Caco-2 (cell line): ENCODE measurements at regions of chr20 and their contacts with region 1.

Region 1: GRCh38 chr20:63223221-63224207 is 7.6 kb upstream of the YTHDF1 start:
- DNase-seq: peak; percentile 85
- H3K4me3 ChIP-seq: no peak overlapping the region
- H3K4me3 Mint-ChIP-seq: no peak overlapping the region
- H3K27ac Mint-ChIP-seq: no peak overlapping the region
- H3K4me1 ChIP-seq: peaks cover 12% of the 10 kb centered on the region; the same call in 1 of the 2 replicates
- H3K4me1 Mint-ChIP-seq: peaks cover 7% of the 10 kb centered on the region
- H3K27me3 ChIP-seq: no peaks in the 10 kb centered on the region
- H3K27me3 Mint-ChIP-seq: peaks cover 3% of the 10 kb centered on the region
- CTCF ChIP-seq: peak; percentile 96 to 99

Region 2: DNA sequence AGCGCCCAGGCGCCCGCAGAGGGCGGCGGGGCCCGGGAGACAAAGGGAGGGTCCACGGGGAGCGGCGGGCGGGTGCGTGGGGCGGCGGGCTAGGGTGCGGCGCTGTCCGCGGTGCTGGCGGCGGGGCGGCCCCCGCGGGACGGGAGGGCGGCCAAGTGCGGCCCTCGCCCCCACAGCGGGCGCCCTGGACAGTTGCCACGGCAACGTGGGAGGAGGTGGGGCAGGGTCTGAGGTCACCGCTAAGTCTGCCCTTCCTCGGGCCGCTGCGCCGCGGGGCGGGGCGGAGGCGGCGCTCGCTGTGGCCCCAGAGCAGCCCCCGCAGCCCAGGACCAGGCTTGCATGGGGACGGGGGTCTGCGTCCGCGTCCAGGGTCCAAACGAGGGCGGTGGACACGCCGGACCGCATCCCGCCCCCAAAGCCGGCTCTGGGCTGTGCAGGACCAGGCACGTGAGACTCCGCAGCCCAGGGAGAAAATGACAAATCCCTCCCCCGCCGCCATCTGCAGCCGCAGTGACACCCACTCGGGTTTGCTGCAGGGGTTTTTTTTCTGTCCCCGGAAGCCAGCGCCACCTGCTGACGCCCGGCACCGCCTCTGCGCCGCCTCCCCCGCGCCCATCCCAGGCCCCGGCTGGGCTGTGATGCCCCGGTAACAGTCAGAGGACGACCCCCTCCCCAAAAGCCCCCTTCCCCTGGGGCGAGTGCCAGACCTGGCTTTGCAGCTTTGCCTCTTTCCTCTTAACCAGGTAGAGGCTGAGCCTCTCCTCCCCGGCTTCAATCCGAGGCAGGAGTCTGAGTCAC is 44.4 kb before region 1 on chr20:
- CTCF ChIA-PET with region 1: interaction called, 10 read pairs
- POLR2A ChIA-PET with region 1: no interaction called
- intact Hi-C with region 1: no loop called
- DNase-seq: peak; percentile 85 to 88
- H3K4me3 ChIP-seq: peak overlapping the region; percentile 42
- H3K4me3 Mint-ChIP-seq: peak overlapping the region; percentile 71
- H3K27ac Mint-ChIP-seq: no peak overlapping the region
- H3K4me1 ChIP-seq: peaks cover 39% of the 10 kb centered on the region
- H3K4me1 Mint-ChIP-seq: peaks cover 6% of the 10 kb centered on the region
- H3K27me3 ChIP-seq: 0 out of 2 replicates have a peak, but pooled peaks cover 2% of the 10 kb centered on the region
- H3K27me3 Mint-ChIP-seq: peaks cover 18% of the 10 kb centered on the region
- CTCF ChIP-seq: peak; percentile 92 to 94

Region 3: DNA sequence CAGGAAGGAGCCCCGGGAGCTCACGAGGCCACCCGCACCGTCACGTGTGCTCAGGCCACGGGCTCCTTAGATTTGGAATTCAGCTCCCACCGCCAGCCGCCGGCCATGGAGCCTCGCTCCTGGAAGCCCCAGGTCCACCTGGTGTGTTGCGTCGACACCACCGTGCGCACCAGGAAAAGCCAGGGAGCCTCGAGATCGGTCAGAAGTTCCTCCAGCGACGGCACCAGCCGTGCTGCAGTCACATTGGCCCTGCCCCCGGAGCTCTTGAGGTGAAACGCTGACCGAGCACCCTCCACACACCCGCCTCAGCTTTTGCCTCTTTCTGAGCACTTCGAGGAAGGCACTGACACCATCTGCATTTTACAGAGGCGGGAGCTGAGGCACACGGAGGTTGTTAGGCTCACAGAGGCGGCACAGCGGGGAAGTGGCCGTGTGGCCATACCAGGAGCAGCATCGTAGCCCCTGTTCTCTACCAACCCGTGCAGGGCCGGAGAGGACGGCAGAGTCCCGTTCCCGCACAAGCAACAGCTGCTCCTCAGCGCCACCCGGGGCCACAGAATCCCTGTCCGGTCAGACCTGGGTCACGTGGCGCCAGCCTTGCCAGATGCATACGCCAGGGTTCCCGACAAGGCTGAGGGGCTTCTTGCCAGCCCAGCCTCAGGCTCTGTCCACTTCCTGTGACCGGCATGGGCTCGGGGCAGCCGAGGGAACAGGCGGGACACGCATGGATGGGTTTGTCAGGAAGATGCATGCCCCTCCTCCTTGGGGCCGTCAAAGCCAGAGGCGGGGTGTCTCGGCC is 23.2 kb after region 1 on chr20:
- CTCF ChIA-PET with region 1: interaction called, 23 read pairs
- POLR2A ChIA-PET with region 1: no interaction called
- intact Hi-C with region 1: loop called (anchors 1 kb)
- DNase-seq: no peak
- H3K4me3 ChIP-seq: no peak overlapping the region
- H3K4me3 Mint-ChIP-seq: no peak overlapping the region
- H3K27ac Mint-ChIP-seq: no peak overlapping the region
- H3K4me1 ChIP-seq: peaks cover 42% of the 10 kb centered on the region
- H3K4me1 Mint-ChIP-seq: peaks cover 24% of the 10 kb centered on the region
- H3K27me3 ChIP-seq: no peaks in the 10 kb centered on the region
- H3K27me3 Mint-ChIP-seq: no peaks in the 10 kb centered on the region
- CTCF ChIP-seq: no peak

Region 4: DNA sequence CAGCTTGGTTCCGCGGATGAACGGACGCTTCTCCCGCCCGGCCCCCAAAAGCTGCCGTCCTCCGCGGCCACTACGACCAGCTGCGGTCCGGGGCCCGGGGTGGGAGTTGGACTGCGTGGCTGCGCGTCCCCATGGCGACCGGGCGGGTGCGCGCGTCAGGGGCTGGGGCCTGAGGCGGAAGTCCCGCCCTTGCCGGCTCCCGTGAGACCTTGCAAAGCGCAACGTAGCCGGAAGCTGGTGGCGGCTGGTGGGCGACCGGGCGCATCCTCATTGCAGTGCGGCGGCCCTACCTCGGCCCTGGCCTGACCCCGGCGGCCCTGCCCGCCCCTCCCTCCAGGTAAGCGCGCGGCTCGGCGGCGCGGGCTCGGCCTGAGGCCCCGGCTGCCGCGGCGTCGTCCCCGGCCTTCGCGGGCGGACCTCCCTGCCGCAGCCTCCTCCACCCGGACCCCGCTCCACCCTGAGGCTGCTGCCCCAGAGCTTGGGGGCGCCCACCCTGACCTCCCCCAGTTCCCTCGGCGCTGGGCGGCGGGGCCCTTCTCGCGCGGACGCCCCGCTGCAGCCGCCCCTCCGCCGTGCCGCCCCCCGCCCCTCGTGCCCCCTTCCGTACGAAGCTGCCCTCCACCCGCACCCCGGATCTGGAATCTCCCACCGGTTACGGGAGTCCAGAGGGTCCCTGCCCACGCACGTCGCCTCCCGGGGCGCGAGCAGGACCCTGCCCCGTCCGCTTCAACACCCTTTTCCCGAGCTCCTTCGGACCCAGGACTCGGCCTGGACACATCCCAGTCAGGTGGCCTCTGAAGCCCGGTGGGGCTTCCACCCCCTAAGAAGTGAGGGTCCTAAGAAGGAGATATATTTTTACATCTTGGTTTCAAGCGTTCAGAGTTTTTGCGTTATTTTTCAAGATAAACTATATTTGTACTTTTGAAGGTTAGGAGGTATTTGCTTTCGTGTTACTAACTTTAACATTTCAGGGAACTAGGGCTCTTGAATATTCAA is 49.4 kb after region 1 on chr20 and contains the start of gene ARFGAP1:
- CTCF ChIA-PET with region 1: interaction called, 52 read pairs
- POLR2A ChIA-PET with region 1: interaction called, 8 read pairs
- intact Hi-C with region 1: loop called (anchors 2 kb)
- DNase-seq: peak; percentile 96 to 98
- H3K4me3 ChIP-seq: peak within 1 kb of the TSS; percentile 97
- H3K4me3 Mint-ChIP-seq: peak within 1 kb of the TSS; percentile 81
- H3K27ac Mint-ChIP-seq: peak within 1 kb of the TSS; percentile 86
- H3K4me1 ChIP-seq: peaks cover 18% of the 10 kb centered on the region
- H3K4me1 Mint-ChIP-seq: peaks cover 23% of the 10 kb centered on the region
- H3K27me3 ChIP-seq: no peaks in the 10 kb centered on the region
- H3K27me3 Mint-ChIP-seq: no peaks in the 10 kb centered on the region
- CTCF ChIP-seq: no peak
- total RNA-seq, gene ARFGAP1: 275 and 286 TPM in 2 replicates

Region 5: DNA sequence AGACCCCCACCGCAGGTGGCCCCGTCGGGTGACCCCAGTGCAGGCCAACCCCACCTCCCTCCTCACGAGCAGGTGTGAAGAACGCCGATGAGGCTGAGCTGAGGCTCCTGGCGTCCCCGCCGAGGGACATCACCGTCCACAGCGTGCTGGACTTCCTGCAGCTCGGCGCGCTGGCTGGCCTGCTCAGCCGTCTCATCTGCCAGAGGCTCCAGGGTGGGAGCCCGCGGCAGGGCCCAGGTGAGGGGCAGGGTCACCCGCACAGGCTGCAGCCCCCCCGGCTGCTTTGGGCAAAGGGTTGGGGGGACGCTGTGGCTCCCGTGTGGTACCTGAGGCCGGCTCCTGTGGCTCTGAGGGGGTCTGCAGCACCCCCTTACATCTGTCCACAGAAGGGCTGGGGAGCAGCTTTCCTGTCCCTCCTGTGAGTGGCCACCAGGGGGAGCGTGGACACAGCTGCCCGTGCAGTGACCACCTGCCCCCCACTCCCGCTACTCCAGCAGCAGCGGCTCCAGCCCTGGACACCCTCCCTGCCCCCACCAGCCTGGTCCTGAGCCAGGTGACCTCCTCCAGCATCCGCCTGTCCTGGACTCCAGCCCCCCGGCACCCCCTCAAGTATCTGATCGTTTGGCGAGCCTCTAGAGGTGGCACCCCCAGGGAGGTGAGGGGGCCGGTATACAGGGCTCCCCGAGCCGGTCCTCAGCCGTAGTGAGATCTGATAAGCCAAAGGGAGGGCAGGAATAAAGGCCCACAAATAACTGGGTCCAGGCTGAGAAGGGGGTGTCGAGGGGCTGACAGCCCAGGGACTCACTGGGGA is 86.0 kb after region 1 on chr20:
- CTCF ChIA-PET with region 1: interaction called, 13 read pairs
- POLR2A ChIA-PET with region 1: no interaction called
- intact Hi-C with region 1: no loop called
- DNase-seq: peak; percentile 79 to 84
- H3K4me3 ChIP-seq: no peak overlapping the region
- H3K4me3 Mint-ChIP-seq: no peak overlapping the region
- H3K27ac Mint-ChIP-seq: no peak overlapping the region
- H3K4me1 ChIP-seq: no peaks in the 10 kb centered on the region
- H3K4me1 Mint-ChIP-seq: no peaks in the 10 kb centered on the region
- H3K27me3 ChIP-seq: peaks cover 1% of the 10 kb centered on the region; the same call in 1 of the 2 replicates
- H3K27me3 Mint-ChIP-seq: peaks cover 3% of the 10 kb centered on the region
- CTCF ChIP-seq: peak; percentile 99 to 100